Breast epithelium (tissue), 4 donors: ENCODE measurements at regions of chr10 and their contacts with region 1.

Region 1: DNA sequence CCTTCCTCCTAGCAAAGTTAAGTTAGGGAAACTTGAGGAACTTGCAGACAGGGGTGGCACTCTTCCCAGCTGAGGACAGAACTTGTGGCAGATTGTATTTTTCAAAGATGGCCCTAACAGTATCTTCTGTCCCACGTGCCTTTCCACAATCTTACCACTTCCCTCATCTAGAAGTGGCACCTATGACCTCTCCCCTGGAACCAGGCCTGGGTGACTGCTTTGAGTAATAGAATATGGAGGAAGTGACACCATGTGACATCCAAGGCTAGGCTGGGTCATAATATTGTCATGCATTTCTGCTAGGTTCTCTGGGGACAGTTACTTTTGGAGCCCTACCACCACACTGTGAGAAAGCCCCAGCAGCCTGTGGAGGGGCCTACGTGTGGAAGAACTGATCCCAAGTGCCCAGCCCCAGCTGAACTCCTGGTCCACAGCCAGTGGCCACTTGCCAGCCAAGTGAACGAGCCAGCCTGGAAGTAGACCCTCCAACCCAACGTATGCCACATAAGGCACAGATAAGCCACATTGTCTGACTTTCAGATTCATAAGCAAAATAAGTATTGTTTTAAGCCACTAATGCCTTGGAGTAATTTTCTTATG is 193.7 kb downstream of the PTPN20 start:
- DNase-seq: no peak
- H3K4me3 ChIP-seq: no peak overlapping the region
- H3K27ac ChIP-seq: no peak overlapping the region
- H3K4me1 ChIP-seq: no peaks in the 10 kb centered on the region
- H3K27me3 ChIP-seq: no peaks in the 10 kb centered on the region
- CTCF ChIP-seq: no peak
- POLR2A ChIP-seq: no peak

Region 2: GRCh38 chr10:47092822-47093221 is 12.1 kb before region 1 on chr10:
- intact Hi-C with region 1: no loop called
- DNase-seq: no peak
- H3K4me3 ChIP-seq: no peak overlapping the region
- H3K27ac ChIP-seq: no peak overlapping the region
- H3K4me1 ChIP-seq: no peaks in the 10 kb centered on the region
- H3K27me3 ChIP-seq: no peaks in the 10 kb centered on the region
- CTCF ChIP-seq: no peak
- POLR2A ChIP-seq: no peak

Region 3: DNA sequence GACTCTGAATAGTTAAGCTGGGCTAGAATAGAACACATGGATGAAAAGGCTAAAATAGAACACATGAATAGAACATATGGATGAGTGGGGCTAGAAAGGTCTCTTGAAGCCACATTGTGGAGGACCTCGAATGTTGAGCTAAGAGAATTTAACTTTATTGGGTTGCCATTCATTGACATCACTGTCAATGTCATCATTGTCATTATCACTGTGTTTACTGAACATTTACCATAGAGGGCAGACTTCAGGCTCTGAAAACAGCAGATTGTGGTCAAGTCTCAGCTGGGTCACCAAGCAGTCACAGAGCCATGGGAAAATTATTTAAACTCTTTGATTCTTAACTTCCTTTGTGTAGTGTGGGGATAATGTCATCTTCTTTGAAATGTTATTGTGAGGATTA is 1660.2 kb after region 1 on chr10:
- intact Hi-C with region 1: loop called (anchors 10 kb)
- DNase-seq: no peak
- H3K4me3 ChIP-seq: no peak overlapping the region
- H3K27ac ChIP-seq: no peak overlapping the region
- H3K4me1 ChIP-seq: no peaks in the 10 kb centered on the region
- H3K27me3 ChIP-seq: no peaks in the 10 kb centered on the region
- CTCF ChIP-seq: no peak
- POLR2A ChIP-seq: no peak